Heart left ventricle (tissue), 16 donors: ENCODE measurements at regions of chr12 and their contacts with region 1.

Region 1: DNA sequence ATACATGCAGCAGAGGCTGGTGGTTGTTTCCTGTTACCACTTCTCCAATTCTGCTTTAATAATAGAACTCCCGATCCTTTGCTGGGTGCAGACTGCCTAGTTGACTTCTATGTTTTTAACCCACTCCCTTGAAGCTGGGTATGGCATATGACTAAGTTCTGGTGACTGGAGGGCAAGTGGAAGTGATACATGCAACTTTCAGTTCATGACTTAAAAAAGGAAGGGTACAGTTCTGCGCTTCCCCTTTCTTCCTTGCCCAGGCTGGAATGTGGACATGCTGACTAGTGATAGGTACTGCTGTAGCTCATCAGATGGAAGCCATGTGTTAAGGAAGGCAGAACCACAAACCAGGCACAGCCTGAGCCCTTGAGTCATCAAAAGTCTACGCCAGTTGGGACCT is 2.4 kb upstream of the A2M start:
- DNase-seq: no peak
- ATAC-seq: peak; percentile 13 to 70 (median 40)
- H3K4me3 ChIP-seq: no peak overlapping the region
- H3K27ac ChIP-seq: peak overlapping the region; percentile 73 to 90 (median 83)
- H3K4me1 ChIP-seq: peaks cover 3 to 70% (median 39%) of the 10 kb centered on the region in 12 donors
- H3K27me3 ChIP-seq: no peaks in the 10 kb centered on the region
- CTCF ChIP-seq: no peak
- POLR2A ChIP-seq: no peak

Region 2: GRCh38 chr12:9064815-9065606 is 53.1 kb before region 1 on chr12:
- intact Hi-C with region 1: loop called in 2 of 10 experiments (anchors 5 kb)
- DNase-seq: peak; percentile 79 to 90 (median 83)
- ATAC-seq: peak; percentile 88 to 95 (median 94)
- H3K4me3 ChIP-seq: peak overlapping the region; percentile 62 to 97 (median 85)
- H3K27ac ChIP-seq: peak overlapping the region; percentile 89 to 99 (median 97)
- H3K4me1 ChIP-seq: peaks cover 0 to 17% (median 8%) of the 10 kb centered on the region in 12 donors
- H3K27me3 ChIP-seq: no peaks in the 10 kb centered on the region
- CTCF ChIP-seq: no peak
- POLR2A ChIP-seq: peak in 1 of 2 donors; percentile 86

Region 3: GRCh38 chr12:9096563-9097176 is 21.5 kb before region 1 on chr12:
- intact Hi-C with region 1: no loop called
- DNase-seq: no peak
- ATAC-seq: no peak
- H3K4me3 ChIP-seq: no peak overlapping the region
- H3K27ac ChIP-seq: no peak overlapping the region
- H3K4me1 ChIP-seq: peaks cover 0 to 27% (median 10%) of the 10 kb centered on the region in 12 donors
- H3K27me3 ChIP-seq: no peaks in the 10 kb centered on the region
- CTCF ChIP-seq: no peak
- POLR2A ChIP-seq: no peak

Region 4: GRCh38 chr12:9149372-9149771 is 31.2 kb after region 1 on chr12:
- intact Hi-C with region 1: no loop called
- DNase-seq: no peak
- ATAC-seq: no peak
- H3K4me3 ChIP-seq: no peak overlapping the region
- H3K27ac ChIP-seq: no peak overlapping the region
- H3K4me1 ChIP-seq: no peaks in the 10 kb centered on the region
- H3K27me3 ChIP-seq: no peaks in the 10 kb centered on the region
- CTCF ChIP-seq: peak in 1 of 12 donors; percentile 8
- POLR2A ChIP-seq: no peak

Region 5: GRCh38 chr12:9163392-9163791 is 45.2 kb after region 1 on chr12:
- intact Hi-C with region 1: loop called in 6 of 10 experiments (anchors 2 to 5 kb)
- DNase-seq: peak in 3 of 5 donors; percentile 27 to 36 (median 30)
- ATAC-seq: peak; percentile 77 to 93 (median 82)
- H3K4me3 ChIP-seq: no peak overlapping the region
- H3K27ac ChIP-seq: peak overlapping the region in 11 of 12 donors; percentile 12 to 83 (median 65)
- H3K4me1 ChIP-seq: peaks cover 0 to 34% (median 8%) of the 10 kb centered on the region in 12 donors
- H3K27me3 ChIP-seq: no peaks in the 10 kb centered on the region
- CTCF ChIP-seq: no peak
- POLR2A ChIP-seq: no peak

Region 6: GRCh38 chr12:9237286-9237685 is 119.1 kb after region 1 on chr12:
- intact Hi-C with region 1: loop called in 6 of 10 experiments (anchors 2 to 10 kb)
- DNase-seq: no peak
- ATAC-seq: no peak
- H3K4me3 ChIP-seq: peak overlapping the region in 1 of 12 donors; percentile 59
- H3K27ac ChIP-seq: peak overlapping the region in 1 of 12 donors; percentile 53
- H3K4me1 ChIP-seq: peaks cover 0 to 8% (median 0%) of the 10 kb centered on the region in 12 donors
- H3K27me3 ChIP-seq: no peaks in the 10 kb centered on the region
- CTCF ChIP-seq: no peak
- POLR2A ChIP-seq: no peak

Region 7: DNA sequence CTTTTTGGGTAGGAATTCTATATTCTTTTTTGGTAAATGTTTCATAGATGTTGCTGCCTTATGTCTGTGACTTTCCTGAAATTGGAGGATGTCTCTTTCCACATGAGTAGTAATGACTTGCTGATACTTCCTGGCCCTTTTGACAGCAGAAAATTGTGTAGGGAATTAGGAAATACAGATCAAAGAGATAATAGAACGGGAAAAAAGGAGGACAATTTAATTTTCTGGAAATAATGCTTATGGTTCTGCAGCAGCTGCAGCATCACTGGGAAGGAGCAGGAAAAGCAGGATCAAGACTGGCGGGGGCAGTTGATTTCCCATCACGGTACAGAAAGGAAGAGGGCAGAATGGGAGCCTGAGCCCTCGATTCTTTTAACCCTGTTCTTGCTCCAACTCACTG is 158.8 kb after region 1 on chr12:
- intact Hi-C with region 1: loop called in 1 of 10 experiments (anchors 5 kb)
- DNase-seq: no peak
- ATAC-seq: no peak
- H3K4me3 ChIP-seq: no peak overlapping the region
- H3K27ac ChIP-seq: no peak overlapping the region
- H3K4me1 ChIP-seq: no peaks in the 10 kb centered on the region
- H3K27me3 ChIP-seq: no peaks in the 10 kb centered on the region
- CTCF ChIP-seq: no peak
- POLR2A ChIP-seq: no peak